ENCODE measurements at regions of chr17 and their contacts with region 1.

Region 1: DNA sequence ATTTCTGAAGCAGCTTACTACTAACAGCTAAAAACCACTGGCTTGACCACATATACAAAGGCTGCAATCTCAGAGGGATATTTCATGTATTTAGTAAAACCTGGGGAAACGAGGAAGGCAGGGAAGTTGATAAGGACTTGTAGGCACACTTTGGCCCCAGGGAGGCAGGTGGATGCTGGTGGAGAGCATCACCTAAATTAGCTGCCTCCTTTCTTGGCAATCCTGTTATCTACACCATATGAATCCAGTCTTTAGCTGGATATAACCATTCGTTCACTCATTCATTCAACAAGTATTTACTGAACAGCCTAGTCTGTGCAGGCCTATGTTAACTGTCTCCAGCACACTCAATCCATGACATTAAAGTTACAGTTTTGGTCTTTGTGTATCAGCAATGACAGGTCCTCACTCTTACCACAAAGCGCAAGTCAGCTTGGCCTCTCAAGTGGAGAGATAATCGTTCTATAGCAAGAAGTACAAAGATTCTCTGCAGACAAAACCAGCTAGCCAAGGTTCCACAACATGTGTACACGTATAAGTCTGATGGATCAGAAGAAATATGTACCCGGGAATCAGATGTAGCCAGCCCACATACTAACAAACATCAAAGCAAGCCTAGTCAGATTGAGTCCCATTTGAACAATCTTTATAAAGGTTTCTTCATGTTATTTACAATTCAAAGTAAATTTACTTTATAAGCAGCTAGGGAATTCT is 10.8 kb downstream of the MRPS23 start:
- DNase-seq: no peak

Region 2: DNA sequence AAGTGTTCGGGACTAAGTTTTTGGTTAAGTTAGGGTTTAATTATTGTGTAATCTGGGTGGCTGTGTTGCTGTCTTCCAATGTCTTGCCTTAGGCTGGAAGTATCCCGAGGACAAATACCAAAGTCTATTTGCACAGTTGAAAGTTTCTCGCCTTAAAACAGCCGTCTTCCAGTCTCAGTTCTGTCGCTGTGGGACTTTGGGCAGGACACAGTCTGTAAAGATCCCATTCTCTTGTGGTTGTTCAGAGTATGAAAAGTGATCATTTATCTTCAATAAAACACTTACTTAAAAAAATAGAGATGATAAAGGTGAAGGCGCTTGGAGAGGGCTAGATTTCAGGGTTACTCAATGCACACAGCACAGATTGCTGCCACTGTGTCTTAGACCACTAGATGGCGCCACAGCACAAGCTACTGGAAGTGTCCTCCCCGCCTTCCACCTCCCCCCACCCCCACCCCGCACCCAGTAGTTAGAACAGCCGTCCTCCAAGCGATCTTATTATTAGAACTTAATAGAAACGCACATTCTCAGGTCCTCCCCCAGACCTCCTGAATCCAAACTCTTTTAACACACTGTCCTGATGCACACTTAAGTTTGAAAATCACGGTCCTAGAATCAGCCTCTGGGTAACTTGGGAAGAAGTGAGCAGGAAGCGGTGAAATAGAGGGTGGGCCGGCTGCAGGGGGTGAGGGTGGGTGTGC is 708.1 kb before region 1 on chr17:
- intact Hi-C with region 1: loop called (anchors 5 kb)
- DNase-seq: no peak

Measured in cardiac septum (tissue), 1 donor.